Activated naive CD4-positive, alpha-beta T cell treated with anti-CD3 and anti-CD28 coated beads for 36 hours (primary cell): ENCODE measurements at regions of chr16 and their contacts with region 1.

Region 1: DNA sequence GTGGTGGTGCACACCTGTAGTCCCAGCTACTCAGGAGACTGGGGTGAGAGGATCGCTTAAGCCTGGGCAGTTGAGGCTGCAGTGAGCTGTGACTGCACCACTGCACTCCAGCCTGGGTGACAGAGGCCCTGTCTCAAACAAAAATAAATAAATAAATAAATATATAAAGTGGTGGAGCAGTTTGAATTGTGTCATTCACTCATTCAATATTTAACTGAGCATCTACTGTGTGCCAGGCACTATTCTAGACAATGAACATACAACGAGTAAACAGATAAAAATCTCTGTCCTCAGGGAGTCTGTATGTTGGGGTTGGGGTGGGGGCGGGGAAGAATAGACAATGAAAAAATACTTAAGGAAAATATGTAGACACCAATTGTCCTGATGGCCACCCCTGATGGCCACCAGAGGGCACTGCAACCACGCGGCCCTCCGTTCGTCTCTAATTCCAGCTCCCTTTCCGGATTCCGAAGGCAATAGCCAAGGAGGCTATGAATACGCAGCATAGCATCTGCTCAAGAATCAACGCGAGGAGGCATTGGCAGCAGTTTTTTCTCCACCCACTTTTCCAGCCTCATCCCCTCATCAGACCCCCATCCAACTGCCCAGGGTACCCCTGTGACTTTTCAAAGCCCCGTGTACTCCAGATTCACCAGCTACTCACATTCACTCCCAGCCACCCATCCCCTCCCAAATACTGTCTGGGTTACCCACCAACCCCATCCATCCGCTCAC is 21.4 kb downstream of the QPRT start:
- DNase-seq: peak; percentile 84
- H3K4me3 Mint-ChIP-seq: no peak overlapping the region
- H3K27ac Mint-ChIP-seq: peak overlapping the region; percentile 13
- H3K4me1 Mint-ChIP-seq: peaks cover 29% of the 10 kb centered on the region
- H3K27me3 Mint-ChIP-seq: no peaks in the 10 kb centered on the region

Region 2: DNA sequence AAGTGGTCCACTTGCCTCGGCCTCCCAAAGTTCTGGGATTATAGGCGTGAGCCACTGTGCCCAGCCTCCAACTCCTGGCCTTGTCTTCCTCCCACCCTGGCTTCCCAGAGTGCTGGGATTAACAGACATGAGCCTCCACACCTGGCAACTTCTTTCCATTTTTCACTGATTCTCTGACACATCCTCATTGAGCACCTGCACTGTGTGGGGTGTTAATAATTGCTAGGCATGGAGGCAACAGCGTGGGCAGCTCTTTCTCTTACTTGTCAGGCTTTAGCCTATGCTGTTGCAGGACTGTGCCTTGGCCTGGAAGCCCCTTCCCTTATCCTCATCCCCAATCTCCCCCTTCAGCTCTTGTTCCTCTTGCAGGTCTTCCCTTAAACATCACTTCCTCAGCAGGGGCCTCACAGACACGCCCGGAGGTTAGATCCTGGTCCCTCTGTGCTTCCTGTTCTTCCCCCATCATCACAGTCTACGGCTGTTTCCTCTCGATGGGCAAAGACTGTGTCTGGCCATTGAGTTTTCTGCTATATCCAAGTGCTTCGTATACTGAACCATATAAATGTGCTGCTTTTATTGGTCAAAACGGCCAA is 13.6 kb before region 1 on chr16:
- CTCF ChIA-PET with region 1: interaction called, 22 read pairs
- intact Hi-C with region 1: no loop called
- DNase-seq: no peak
- H3K4me3 Mint-ChIP-seq: no peak overlapping the region
- H3K27ac Mint-ChIP-seq: no peak overlapping the region
- H3K4me1 Mint-ChIP-seq: peaks cover 19% of the 10 kb centered on the region
- H3K27me3 Mint-ChIP-seq: no peaks in the 10 kb centered on the region

Region 3: DNA sequence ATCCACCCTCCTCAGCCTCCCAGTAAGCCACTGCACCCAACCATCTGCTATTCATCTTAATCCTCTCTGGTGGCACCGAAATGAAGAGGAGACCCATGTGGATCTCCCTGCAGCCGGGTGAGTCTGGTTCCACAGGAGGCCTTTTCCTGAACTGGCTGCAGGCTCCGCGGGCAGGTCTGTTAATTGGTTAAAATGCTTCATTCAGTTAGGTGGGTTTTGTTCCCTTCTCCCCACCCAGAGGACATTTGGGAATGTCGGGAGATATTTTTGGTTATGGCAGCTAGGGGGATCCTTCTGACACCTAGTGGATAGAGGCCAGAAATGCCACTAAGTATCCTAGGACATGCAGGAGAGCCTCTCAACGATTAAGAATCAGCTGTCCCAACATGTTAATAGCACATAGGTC is 28.7 kb after region 1 on chr16:
- CTCF ChIA-PET with region 1: interaction called, 28 read pairs
- intact Hi-C with region 1: loop called (anchors 2 kb)
- DNase-seq: no peak
- H3K4me3 Mint-ChIP-seq: no peak overlapping the region
- H3K27ac Mint-ChIP-seq: no peak overlapping the region
- H3K4me1 Mint-ChIP-seq: peaks cover 35% of the 10 kb centered on the region
- H3K27me3 Mint-ChIP-seq: no peaks in the 10 kb centered on the region

Region 4: GRCh38 chr16:29805378-29806098 is 105.1 kb after region 1 on chr16:
- CTCF ChIA-PET with region 1: interaction called, 10 read pairs
- intact Hi-C with region 1: no loop called
- DNase-seq: peak; percentile 99
- H3K4me3 Mint-ChIP-seq: peak overlapping the region; percentile 98
- H3K27ac Mint-ChIP-seq: peak overlapping the region; percentile 100
- H3K4me1 Mint-ChIP-seq: peaks cover 37% of the 10 kb centered on the region
- H3K27me3 Mint-ChIP-seq: no peaks in the 10 kb centered on the region

Region 5: DNA sequence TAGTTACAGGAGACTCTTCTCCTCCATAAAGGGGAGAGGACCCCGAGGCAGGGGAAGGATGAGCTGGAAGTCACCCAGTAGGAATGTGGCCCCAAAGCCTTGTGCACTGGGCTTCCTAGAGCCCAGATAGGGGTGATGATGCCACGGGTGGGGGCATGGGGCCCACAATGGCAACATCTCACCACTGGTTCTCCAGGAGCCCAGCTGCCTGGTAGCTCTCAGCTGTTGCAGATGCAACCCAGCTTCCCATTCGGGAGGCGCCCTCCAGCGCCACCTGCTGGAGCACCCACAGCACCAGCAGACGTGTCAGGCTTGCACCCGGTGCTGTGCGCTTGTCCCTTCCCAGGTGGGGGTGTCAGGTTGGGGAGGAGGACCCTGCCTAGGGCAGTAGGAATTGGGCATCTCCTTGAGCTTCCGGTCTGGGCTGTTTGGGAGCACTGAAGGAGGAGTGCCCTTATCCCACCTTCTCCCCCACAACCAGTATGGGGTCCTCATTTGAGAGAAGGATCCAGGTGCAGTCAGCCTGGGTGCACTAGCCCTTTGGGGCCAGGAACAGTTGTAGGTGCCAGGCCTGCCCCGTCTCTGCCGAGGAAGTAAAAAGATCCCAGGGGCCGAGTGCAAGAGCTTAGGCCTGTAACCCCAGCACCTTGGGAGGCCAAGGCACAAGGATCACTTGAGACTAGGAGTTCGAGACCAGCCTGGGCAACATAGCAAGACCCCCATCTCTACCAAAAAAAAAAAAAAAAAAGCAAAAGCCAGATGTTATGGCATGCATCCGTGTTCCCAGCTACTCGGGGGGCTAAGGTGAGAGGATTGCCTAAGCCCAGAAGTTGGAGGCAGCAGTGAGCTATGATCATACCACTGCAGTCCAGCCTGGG is 148.2 kb after region 1 on chr16:
- CTCF ChIA-PET with region 1: interaction called, 72 read pairs
- intact Hi-C with region 1: loop called (anchors 1 kb)
- DNase-seq: peak; percentile 91
- H3K4me3 Mint-ChIP-seq: no peak overlapping the region
- H3K27ac Mint-ChIP-seq: no peak overlapping the region
- H3K4me1 Mint-ChIP-seq: peaks cover 5% of the 10 kb centered on the region
- H3K27me3 Mint-ChIP-seq: no peaks in the 10 kb centered on the region

Region 6: DNA sequence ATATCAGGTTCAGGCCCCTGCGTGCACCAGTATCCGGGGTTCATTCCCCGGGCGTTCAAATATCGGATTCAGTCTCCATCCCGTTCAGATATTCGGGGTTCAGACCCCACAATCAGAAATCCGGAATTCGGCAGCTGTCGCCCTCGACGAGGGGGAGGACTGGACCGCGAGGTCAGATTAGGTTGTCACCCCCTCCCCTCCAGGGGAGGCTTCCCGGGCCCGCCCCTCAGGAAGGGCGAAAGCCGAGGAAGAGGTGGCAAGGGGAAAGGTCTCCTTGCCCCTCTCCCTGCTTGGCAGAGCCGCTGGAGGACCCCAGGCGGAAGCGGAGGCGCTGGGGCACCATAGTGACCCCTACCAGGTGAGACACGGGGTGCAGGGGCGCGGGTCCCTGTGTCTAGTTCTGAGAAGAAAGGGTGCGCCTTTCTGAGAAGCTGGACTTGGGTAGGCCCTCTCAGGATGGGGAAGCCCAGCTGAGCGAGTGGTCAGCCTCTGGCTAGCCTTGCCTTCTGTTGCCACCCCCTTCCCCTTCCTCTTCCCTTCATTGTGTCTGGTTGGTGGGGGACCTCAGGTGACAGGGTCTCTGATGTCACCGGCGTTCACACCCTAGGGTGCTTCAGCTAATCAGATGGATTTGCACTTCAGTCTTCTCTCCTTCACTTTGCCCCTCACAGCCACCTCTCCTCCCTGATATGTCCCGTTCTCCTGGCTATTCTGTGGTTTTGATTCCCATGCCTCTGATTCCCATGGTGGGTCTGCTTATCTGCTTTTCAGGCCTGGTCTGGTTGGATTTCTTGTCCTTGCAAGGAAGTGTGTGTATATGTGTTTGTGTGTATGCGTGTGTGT is 274.1 kb after region 1 on chr16:
- CTCF ChIA-PET with region 1: no interaction called
- intact Hi-C with region 1: no loop called
- DNase-seq: peak; percentile 46
- H3K4me3 Mint-ChIP-seq: peak overlapping the region; percentile 97
- H3K27ac Mint-ChIP-seq: peak overlapping the region; percentile 82
- H3K4me1 Mint-ChIP-seq: peaks cover 28% of the 10 kb centered on the region
- H3K27me3 Mint-ChIP-seq: no peaks in the 10 kb centered on the region

Region 7: DNA sequence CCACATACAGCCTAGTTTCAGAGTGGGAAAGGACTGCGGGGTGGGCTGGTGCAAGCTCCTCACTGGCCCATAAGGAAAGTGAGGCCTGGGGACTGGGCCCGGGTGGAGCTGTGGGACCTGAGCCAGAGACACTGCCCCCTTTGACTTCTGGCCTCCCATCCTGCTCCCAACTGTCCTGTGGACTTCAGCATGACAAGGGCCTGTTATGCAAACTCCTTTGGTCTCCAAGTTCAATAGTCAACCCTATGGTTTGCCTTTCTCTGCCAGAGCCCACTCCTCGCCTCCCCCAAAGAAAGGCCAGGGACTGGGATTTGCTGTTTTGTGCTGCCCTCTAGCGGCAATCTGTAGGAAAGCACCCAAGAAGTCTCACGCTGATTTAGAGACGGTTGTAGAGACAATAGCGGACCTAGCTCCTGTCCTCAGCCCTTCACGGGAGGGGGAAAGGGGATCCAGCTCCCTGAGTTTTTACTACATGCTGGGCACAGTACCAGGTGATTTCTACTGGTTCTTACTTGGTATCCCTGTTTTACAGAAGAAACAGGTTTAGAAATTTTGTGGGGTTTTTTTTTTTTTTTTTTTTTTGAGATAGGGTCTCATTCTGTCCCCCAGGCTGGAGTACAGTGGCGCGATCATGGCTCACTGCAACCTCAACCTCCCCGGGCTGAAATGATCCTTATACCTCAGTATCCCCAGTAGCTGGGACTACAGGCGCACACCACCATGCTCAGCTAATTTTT is 331.8 kb after region 1 on chr16:
- CTCF ChIA-PET with region 1: interaction called, 15 read pairs
- intact Hi-C with region 1: no loop called
- DNase-seq: peak; percentile 81
- H3K4me3 Mint-ChIP-seq: no peak overlapping the region
- H3K27ac Mint-ChIP-seq: no peak overlapping the region
- H3K4me1 Mint-ChIP-seq: peaks cover 10% of the 10 kb centered on the region
- H3K27me3 Mint-ChIP-seq: peaks cover 38% of the 10 kb centered on the region